ENCODE measurements at regions of chr11 and their contacts with region 1.

Region 1: DNA sequence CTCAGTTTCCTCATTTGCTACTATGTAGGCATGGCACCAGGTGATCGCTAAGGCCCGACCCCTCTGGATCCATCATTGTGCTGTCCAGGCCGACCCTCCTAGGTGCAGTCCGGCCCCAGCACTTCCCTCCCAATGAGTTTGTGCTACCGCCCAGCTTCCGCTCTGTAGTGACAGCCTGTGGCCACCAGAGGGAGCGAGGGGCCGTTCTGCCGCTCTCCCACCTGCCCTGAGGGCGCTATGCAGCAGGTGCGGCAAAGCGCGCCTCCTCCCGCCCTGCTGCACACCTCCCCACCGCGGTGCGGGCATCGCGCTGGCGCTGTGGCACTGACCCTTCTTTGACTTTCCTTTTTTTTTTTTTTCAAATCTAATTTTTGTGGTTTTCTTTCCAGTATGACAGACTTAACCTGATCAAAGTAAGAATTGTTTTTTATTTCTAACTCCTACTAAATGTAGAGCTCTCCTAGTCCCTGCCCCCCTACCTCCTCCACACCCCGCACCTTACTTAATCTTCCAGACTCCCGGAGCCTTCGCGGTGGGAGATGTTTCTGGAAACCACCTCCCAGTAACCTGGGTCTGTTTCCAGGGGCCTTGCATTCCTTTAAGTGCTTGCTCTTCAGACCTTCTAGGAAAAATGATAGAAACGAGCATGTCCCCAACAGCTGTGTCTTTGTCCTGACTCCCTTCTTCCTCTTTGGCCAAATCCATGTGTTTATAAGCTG is 73.7 kb downstream of the SCN3B start:
- DNase-seq: peak; percentile 88
- CTCF ChIP-seq: peak; percentile 97

Region 2: DNA sequence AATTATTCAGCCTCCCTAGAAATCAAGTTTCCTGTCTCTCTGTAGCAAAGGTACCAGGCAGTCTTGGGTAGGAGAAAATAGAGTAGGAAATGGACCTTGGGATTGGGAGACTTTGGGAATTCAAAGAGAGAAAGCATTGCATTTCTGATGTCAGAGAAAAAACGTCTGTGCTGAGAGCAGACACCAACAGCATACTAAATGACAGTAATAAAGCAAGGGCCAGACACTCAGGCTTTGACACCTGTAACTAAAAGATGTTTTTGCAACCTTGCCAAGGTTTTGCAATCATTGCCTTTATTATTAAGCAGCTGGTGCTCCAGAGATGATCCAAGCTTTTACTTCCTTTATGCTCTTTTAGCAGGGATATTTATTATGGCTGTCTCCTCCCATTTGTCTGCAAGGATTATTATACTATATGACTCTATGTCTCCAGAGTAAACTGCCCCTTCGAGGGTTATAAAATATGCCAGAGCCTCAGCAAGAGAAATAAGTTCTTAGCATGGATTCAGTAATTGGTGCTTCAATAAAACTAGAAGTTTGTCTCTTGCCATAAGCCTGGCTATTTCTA is 235.8 kb before region 1 on chr11:
- CTCF ChIA-PET with region 1: no interaction called
- POLR2A ChIA-PET with region 1: no interaction called
- DNase-seq: no peak
- CTCF ChIP-seq: no peak

Region 3: GRCh38 chr11:123391646-123392348 is 188.9 kb before region 1 on chr11:
- CTCF ChIA-PET with region 1: no interaction called
- POLR2A ChIA-PET with region 1: no interaction called
- DNase-seq: no peak
- CTCF ChIP-seq: no peak

Region 4: GRCh38 chr11:123511037-123511870 is 69.5 kb before region 1 on chr11:
- CTCF ChIA-PET with region 1: interaction called, 19 read pairs
- POLR2A ChIA-PET with region 1: no interaction called
- DNase-seq: peak; percentile 79
- CTCF ChIP-seq: peak; percentile 83

Region 5: GRCh38 chr11:123519055-123519796 is 61.5 kb before region 1 on chr11:
- CTCF ChIA-PET with region 1: interaction called, 10 read pairs
- POLR2A ChIA-PET with region 1: no interaction called
- DNase-seq: no peak
- CTCF ChIP-seq: no peak

Region 6: DNA sequence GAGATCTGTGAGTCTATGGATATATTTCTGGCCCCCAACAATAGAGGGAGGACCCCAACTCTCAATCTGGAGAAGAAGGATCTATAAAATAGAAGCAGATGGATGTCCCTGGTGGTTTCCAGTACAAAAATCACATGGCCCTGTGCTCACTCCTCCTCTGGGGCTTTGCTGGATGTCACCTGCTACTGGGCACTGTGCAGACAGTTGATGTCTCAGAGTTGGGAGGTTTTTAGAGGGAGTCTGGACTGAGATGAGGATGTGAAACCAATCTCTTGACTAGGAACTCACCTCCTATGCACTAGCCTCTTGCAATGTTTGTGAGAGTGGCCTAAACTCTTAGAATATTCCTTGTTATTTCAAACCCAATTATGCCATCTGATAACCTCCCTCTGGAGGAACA is 33.5 kb before region 1 on chr11:
- CTCF ChIA-PET with region 1: interaction called, 12 read pairs
- POLR2A ChIA-PET with region 1: no interaction called
- DNase-seq: peak; percentile 69
- CTCF ChIP-seq: no peak

Region 7: DNA sequence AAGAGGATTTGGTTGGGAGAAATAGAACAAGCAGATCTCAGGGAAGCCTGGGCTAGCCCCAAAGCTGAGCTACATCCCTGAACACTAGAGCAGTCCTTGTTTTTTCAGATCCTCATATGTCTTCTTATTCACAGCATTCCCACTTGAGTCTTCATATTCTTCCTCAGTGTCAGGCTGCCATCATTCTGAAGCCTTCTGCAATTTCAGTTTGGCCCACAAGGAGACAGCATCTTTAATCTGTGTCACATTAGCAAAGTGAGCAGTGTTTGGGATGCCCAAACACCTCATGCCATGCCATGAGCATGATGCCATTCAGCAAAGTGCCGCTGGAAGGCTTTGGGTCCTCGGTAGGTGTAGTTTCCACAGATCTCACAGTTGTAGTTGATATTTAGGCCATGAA is 17.1 kb after region 1 on chr11:
- CTCF ChIA-PET with region 1: interaction called, 23 read pairs
- POLR2A ChIA-PET with region 1: no interaction called
- DNase-seq: no peak
- CTCF ChIP-seq: no peak

Region 8: DNA sequence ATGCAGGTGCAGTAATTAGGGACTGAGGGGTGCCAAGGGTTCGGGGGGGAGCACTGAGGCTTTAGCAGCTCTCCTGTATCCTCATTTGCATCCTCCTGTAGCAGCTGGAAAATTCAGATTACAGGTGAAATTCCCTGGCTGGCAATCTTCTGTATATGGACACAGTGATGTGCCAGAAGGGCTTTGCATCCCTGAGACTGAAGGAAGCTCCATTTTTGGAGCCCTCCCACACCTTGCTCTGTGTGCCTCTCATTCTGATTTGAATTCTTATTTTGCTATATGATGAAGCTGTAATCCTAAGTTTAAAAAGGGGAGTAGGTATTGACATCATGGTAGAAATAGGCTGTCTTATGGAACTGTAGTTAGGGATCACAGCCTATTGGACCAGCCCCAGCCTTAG is 27.1 kb after region 1 on chr11:
- CTCF ChIA-PET with region 1: interaction called, 14 read pairs
- POLR2A ChIA-PET with region 1: no interaction called
- DNase-seq: no peak
- CTCF ChIP-seq: no peak

Region 9: DNA sequence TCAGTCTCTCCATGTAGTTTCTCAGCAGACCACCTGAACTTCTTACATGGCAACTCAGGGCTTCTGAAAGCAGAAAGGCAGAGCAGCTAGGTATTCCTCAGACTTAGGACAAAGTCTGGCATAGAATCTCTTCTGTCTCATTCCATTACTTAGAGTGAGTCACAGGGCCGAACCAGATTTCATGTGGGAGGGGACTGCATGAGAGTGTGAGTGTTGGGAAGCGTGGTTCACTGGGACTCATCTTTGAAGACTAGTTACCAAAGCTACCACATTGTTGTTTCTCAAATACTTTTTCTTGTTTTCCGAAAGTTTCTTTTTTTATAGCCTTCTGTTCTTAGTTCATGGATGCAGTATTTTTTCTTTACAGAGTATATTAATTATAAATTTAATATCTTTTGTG is 109.8 kb after region 1 on chr11:
- CTCF ChIA-PET with region 1: no interaction called
- POLR2A ChIA-PET with region 1: no interaction called
- DNase-seq: no peak
- CTCF ChIP-seq: no peak